ENCODE measurements at regions of chr14 and their contacts with region 1.

Region 1: DNA sequence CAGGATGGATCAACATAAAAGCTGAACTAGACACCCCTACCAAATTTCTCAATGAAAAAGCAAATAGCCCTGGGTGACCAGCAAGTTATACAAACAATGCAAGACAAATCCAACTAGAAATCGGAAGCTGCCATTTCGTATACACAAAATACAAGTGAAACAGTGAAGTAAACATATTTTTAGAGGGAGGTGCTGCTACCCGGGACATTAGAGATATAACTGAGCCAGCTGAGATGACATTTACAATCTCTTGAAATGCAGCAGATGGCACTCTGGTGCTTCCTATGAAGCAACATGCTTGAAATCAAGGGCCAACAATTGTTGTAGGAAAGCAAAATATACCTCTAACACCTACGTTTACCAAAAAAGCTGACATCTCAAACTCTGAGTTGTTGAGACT is 25.5 kb downstream of the BDKRB1 start:
- DNase-seq: no peak
- H3K4me3 ChIP-seq: no peak overlapping the region
- H3K27ac ChIP-seq: peak overlapping the region in 1 of 2 experiments; percentile 72; a peak in 2 of 4 replicates
- H3K4me1 ChIP-seq: peaks cover 0 to 31% of the 10 kb centered on the region in 2 experiments; a peak in 2 of 4 replicates
- H3K27me3 ChIP-seq: no peaks in the 10 kb centered on the region
- CTCF ChIP-seq: peak; percentile 14
- EP300 ChIP-seq: no peak
- RAD21 ChIP-seq: peak; percentile 83

Region 2: DNA sequence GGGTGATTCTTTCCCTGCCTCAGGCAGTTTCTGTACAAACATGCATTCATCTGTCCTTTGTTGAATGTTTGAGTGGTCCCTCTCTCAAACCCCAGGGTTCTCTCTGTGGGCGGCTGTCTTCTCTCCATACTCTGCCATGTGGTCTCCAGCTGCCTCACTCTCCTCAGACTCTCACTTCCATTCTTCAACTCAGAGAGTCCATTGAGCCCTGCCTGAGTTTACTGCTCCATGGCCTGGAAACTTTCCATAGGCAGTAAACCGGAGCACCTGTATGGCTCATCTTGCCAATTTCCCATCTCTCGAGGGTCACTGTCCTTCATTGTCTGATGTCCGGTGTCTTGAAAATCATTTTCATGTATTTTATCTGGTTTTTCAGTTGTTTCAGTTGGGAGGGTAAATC is 231.0 kb before region 1 on chr14:
- CTCF ChIA-PET with region 1: no interaction called
- POLR2A ChIA-PET with region 1: no interaction called
- DNase-seq: peak; percentile 33
- H3K4me3 ChIP-seq: no peak overlapping the region
- H3K27ac ChIP-seq: peak overlapping the region in 1 of 2 experiments; percentile 71; a peak in 2 of 4 replicates
- H3K4me1 ChIP-seq: peaks cover 10 to 58% of the 10 kb centered on the region in 2 experiments; a peak in 3 of 4 replicates
- H3K27me3 ChIP-seq: no peaks in the 10 kb centered on the region
- CTCF ChIP-seq: no peak
- EP300 ChIP-seq: no peak
- RAD21 ChIP-seq: no peak

Region 3: GRCh38 chr14:96424109-96424989 is 142.9 kb after region 1 on chr14:
- CTCF ChIA-PET with region 1: interaction called, 62 read pairs
- POLR2A ChIA-PET with region 1: no interaction called
- DNase-seq: peak; percentile 77
- H3K4me3 ChIP-seq: no peak overlapping the region; a peak in 1 of 4 replicates
- H3K27ac ChIP-seq: no peak overlapping the region
- H3K4me1 ChIP-seq: no peaks in the 10 kb centered on the region
- H3K27me3 ChIP-seq: no peaks in the 10 kb centered on the region
- CTCF ChIP-seq: peak; percentile 82
- EP300 ChIP-seq: no peak
- RAD21 ChIP-seq: peak; percentile 98